ENCODE measurements at regions of chr16 and their contacts with region 1.

Region 1: GRCh38 chr16:50806099-50807062 is 64.5 kb downstream of the CYLD start:
- DNase-seq: peak; percentile 81
- ATAC-seq: peak; percentile 95
- H3K4me3 ChIP-seq: no peak overlapping the region
- H3K27ac ChIP-seq: no peak overlapping the region
- H3K4me1 ChIP-seq: peaks cover 4% of the 10 kb centered on the region; the same call in 1 of the 2 replicates
- H3K27me3 ChIP-seq: no peaks in the 10 kb centered on the region
- CTCF ChIP-seq: peak; percentile 84 to 90 (median 89)
- EP300 ChIP-seq: no peak
- POLR2A ChIP-seq: no peak
- RAD21 ChIP-seq: peak; percentile 87

Region 2: GRCh38 chr16:50129393-50129792 is 677.0 kb before region 1 on chr16:
- CTCF ChIA-PET with region 1: no interaction called
- POLR2A ChIA-PET with region 1: no interaction called
- RAD21 ChIA-PET with region 1: no interaction called
- SMC1A ChIA-PET with region 1: no interaction called
- in situ Hi-C with region 1: no loop called
- intact Hi-C with region 1: no loop called
- DNase-seq: no peak
- ATAC-seq: no peak
- H3K4me3 ChIP-seq: no peak overlapping the region
- H3K27ac ChIP-seq: no peak overlapping the region
- H3K4me1 ChIP-seq: peaks cover 11% of the 10 kb centered on the region
- H3K27me3 ChIP-seq: no peaks in the 10 kb centered on the region
- CTCF ChIP-seq: no peak
- EP300 ChIP-seq: no peak
- POLR2A ChIP-seq: no peak
- RAD21 ChIP-seq: no peak

Region 3: DNA sequence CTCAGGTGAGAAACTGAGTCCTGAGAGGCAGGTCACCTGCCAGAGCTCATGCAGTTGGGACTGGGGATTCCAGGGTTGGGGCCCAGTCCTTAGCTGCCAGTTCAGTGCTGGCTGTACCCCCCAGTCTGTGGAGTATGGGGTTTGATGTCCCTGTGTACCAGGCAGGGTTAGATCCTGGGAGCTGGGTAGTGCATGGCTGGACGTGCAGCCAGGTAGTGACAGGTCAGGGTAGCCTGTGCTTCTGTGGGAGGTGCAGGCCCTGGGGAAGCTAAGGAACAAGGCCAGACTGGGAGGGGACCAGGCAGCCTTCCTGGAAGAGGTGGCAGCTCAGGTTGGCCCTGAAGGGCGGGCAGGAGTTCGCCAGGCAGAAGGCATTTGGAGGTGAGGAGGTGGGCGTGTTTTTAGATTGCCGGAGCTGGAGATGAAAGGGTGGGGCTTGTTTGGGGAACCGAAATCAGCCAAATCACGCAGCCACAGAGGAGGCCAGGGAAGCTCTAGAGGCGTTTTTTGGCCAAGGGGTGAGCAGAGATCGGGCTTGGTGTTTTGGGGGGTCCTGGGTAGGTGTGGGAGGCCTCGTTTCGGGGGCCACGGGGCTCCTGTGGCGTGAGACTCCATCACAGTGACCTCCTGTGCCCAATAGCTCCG is 532.6 kb before region 1 on chr16:
- CTCF ChIA-PET with region 1: interaction called, 12 read pairs
- POLR2A ChIA-PET with region 1: no interaction called
- RAD21 ChIA-PET with region 1: interaction called, 5 read pairs
- SMC1A ChIA-PET with region 1: no interaction called
- in situ Hi-C with region 1: no loop called
- intact Hi-C with region 1: no loop called
- DNase-seq: peak; percentile 64
- ATAC-seq: peak; percentile 80
- H3K4me3 ChIP-seq: peak overlapping the region; percentile 70
- H3K27ac ChIP-seq: peak overlapping the region; percentile 93
- H3K4me1 ChIP-seq: peaks cover 49% of the 10 kb centered on the region
- H3K27me3 ChIP-seq: no peaks in the 10 kb centered on the region
- CTCF ChIP-seq: no peak
- EP300 ChIP-seq: peak in 1 of 2 experiments; percentile 47; a peak in 2 of 4 replicates
- POLR2A ChIP-seq: peak; percentile 59
- RAD21 ChIP-seq: no peak

Region 4: DNA sequence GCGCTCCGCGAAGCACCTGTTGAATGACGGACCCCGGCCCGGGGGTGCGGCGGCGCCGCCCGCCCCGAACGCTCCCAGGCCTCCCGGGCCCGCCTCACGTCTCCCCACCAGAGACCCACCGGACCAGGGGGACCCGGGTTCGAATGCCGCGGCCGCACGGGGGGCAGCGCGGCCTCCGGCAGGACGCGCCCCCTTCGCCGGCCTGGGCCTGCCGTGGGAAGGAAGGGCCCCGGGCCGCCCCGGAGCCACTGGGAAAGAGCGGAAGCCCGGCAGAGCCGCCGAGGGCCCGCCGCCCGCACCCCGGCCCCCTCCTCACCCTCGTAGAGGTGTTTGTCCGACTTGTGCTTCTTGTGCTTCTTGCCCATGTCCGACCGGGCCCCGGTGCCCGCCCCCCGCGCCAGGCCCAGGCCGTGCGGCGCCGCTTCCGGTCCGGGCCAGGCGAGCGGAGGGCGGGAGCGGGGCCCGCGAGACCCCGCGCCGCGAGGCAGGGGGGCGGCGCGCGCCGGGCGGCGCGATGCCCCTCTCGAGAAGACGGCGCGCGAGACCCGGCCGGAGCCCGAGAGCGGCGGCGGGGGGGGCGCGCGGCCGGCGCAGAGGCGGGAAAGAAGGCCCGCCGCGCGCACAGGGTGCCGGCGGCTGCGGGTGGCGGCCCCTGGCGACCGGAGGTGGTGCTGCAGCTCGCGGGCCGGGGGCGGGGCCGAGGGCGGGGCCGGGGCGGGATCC is 437.8 kb before region 1 on chr16 and contains the start of gene BRD7:
- CTCF ChIA-PET with region 1: interaction called, 23 read pairs
- POLR2A ChIA-PET with region 1: no interaction called
- RAD21 ChIA-PET with region 1: interaction called, 11 read pairs
- SMC1A ChIA-PET with region 1: interaction called, 7 read pairs
- in situ Hi-C with region 1: loop called (anchors 5 kb)
- intact Hi-C with region 1: loop called (anchors 5 kb)
- DNase-seq: no peak
- ATAC-seq: peak; percentile 82
- H3K4me3 ChIP-seq: peak within 1 kb of the TSS; percentile 91
- H3K27ac ChIP-seq: peak within 1 kb of the TSS; percentile 54
- H3K4me1 ChIP-seq: no peaks in the 10 kb centered on the region; the same call in 1 of the 2 replicates
- H3K27me3 ChIP-seq: no peaks in the 10 kb centered on the region
- CTCF ChIP-seq: peak in 2 of 3 experiments; percentile 42 to 52; a peak in 3 of 6 replicates
- EP300 ChIP-seq: no peak
- POLR2A ChIP-seq: peak; percentile 49; the same call in 1 of the 2 replicates
- RAD21 ChIP-seq: no peak; the same call in 1 of the 2 replicates
- polyA plus RNA-seq, gene BRD7: 16.9 to 36.5 TPM

Region 5: GRCh38 chr16:50671644-50672260 is 134.6 kb before region 1 on chr16:
- CTCF ChIA-PET with region 1: interaction called, 293 read pairs
- POLR2A ChIA-PET with region 1: no interaction called
- RAD21 ChIA-PET with region 1: interaction called, 78 read pairs
- SMC1A ChIA-PET with region 1: interaction called, 78 read pairs
- in situ Hi-C with region 1: no loop called
- intact Hi-C with region 1: loop called (anchors 1 kb)
- DNase-seq: no peak
- ATAC-seq: peak; percentile 52
- H3K4me3 ChIP-seq: no peak overlapping the region
- H3K27ac ChIP-seq: no peak overlapping the region
- H3K4me1 ChIP-seq: peaks cover 10% of the 10 kb centered on the region
- H3K27me3 ChIP-seq: no peaks in the 10 kb centered on the region
- CTCF ChIP-seq: peak; percentile 54 to 61 (median 59); a peak in 5 of 6 replicates
- EP300 ChIP-seq: no peak
- POLR2A ChIP-seq: no peak
- RAD21 ChIP-seq: peak; percentile 73

Region 6: DNA sequence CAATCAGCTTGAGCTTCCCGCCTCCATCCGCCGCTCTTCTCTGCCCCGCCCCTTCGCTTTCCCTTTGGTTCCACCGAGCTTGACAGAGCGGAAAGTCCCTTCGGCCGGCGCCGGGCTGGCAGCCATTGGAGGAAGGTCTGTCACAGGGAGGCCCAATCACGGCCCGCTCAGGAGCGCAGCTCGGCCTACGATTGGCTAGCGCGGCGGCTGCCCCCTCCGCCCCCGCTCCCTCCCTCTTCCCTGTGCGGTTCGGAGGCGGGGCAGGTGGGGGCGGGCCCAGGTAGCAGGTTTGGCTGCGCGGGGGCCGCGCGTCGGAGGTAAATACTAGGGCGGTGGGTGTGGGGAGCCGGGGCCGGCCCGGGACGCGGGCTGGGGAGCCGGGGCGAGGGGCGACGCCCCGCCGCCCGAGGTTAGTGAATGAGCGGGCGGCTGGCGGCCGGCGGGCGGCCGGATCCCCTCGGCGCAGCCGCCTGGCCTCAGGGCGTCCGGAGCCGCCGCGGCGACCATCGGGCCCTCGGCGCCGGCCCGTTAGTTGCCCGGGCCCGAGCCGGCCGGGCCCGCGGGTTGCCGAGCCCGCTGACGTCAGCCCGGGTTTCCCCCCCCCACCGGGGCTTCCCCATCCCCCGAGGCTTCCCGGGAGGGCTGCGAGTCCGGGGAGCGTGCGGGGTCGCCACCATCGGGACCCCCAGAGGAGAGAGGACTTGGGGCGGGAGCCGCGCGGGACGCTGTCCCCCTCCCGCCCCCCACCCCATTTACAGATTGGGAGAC is 64.4 kb before region 1 on chr16 and contains the start of gene CYLD:
- CTCF ChIA-PET with region 1: interaction called, 76 read pairs
- POLR2A ChIA-PET with region 1: interaction called, 5 read pairs
- RAD21 ChIA-PET with region 1: interaction called, 29 read pairs
- SMC1A ChIA-PET with region 1: interaction called, 12 read pairs
- in situ Hi-C with region 1: no loop called
- intact Hi-C with region 1: loop called (anchors 2 kb)
- DNase-seq: peak; percentile 95
- ATAC-seq: peak; percentile 95
- H3K4me3 ChIP-seq: peak within 1 kb of the TSS; percentile 84
- H3K27ac ChIP-seq: peak within 1 kb of the TSS; percentile 98
- H3K4me1 ChIP-seq: peaks cover 21% of the 10 kb centered on the region
- H3K27me3 ChIP-seq: no peaks in the 10 kb centered on the region
- CTCF ChIP-seq: no peak
- EP300 ChIP-seq: no peak
- POLR2A ChIP-seq: peak; percentile 36
- RAD21 ChIP-seq: no peak
- polyA plus RNA-seq, gene CYLD: 19.2 to 27.0 TPM

Region 7: GRCh38 chr16:50781043-50781442 is 25.3 kb before region 1 on chr16:
- CTCF ChIA-PET with region 1: interaction called, 31 read pairs
- POLR2A ChIA-PET with region 1: no interaction called
- RAD21 ChIA-PET with region 1: interaction called, 3 read pairs
- SMC1A ChIA-PET with region 1: interaction called, 3 read pairs
- in situ Hi-C with region 1: no loop called
- intact Hi-C with region 1: no loop called
- DNase-seq: no peak
- ATAC-seq: no peak
- H3K4me3 ChIP-seq: no peak overlapping the region
- H3K27ac ChIP-seq: no peak overlapping the region
- H3K4me1 ChIP-seq: no peaks in the 10 kb centered on the region
- H3K27me3 ChIP-seq: no peaks in the 10 kb centered on the region
- CTCF ChIP-seq: peak in 2 of 3 experiments; percentile 14 to 31; a peak in 1 of 6 replicates
- EP300 ChIP-seq: no peak
- POLR2A ChIP-seq: no peak
- RAD21 ChIP-seq: no peak

Region 8: GRCh38 chr16:50842589-50842988 is 36.2 kb after region 1 on chr16:
- CTCF ChIA-PET with region 1: no interaction called
- POLR2A ChIA-PET with region 1: no interaction called
- RAD21 ChIA-PET with region 1: no interaction called
- SMC1A ChIA-PET with region 1: no interaction called
- in situ Hi-C with region 1: no loop called
- intact Hi-C with region 1: no loop called
- DNase-seq: no peak
- ATAC-seq: peak; percentile 26
- H3K4me3 ChIP-seq: no peak overlapping the region
- H3K27ac ChIP-seq: no peak overlapping the region
- H3K4me1 ChIP-seq: no peaks in the 10 kb centered on the region
- H3K27me3 ChIP-seq: peaks cover 4 to 13% of the 10 kb centered on the region in 2 experiments
- CTCF ChIP-seq: no peak
- EP300 ChIP-seq: no peak
- POLR2A ChIP-seq: no peak
- RAD21 ChIP-seq: no peak